ENCODE measurements at regions of chr3 and their contacts with region 1.

Region 1: GRCh38 chr3:188400494-188401243 is 246.7 kb downstream of the LPP start:
- DNase-seq: peak; percentile 82
- ATAC-seq: peak; percentile 87
- H3K4me3 ChIP-seq: no peak overlapping the region
- H3K4me3 Mint-ChIP-seq: peak overlapping the region; percentile 53
- H3K27ac ChIP-seq: peak overlapping the region; percentile 89 to 95
- H3K27ac Mint-ChIP-seq: peak overlapping the region; percentile 95
- H3K4me1 ChIP-seq: peaks cover 63 to 72% of the 10 kb centered on the region in 2 donors
- H3K4me1 Mint-ChIP-seq: peaks cover 87% of the 10 kb centered on the region
- H3K27me3 ChIP-seq: no peaks in the 10 kb centered on the region
- H3K27me3 Mint-ChIP-seq: no peaks in the 10 kb centered on the region
- CTCF ChIP-seq: no peak

Region 2: DNA sequence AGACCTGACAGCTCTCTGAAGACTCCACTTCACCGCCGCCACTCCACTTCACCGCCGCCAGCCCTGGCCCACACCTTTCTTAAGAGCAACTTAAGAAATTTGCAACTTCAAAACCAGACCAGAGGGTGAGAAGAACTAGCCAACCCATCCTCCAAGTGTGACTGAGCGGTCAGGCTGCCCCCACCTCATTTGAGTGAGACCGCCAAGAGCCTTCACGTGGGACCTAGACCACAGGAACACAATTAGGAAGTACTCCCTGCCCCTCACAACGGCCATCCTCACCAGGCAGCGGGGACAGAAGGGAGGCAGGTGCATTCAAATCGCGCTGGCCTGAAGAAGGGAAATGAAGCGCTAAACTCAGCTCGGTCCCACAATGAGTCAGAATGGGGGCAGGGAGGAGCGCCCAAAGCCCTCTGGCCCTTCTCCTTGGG is 498.6 kb before region 1 on chr3:
- CTCF ChIA-PET with region 1: no interaction called
- POLR2A ChIA-PET with region 1: no interaction called
- intact Hi-C with region 1: no loop called
- DNase-seq: peak; percentile 34
- ATAC-seq: peak; percentile 60
- H3K4me3 ChIP-seq: no peak overlapping the region
- H3K4me3 Mint-ChIP-seq: peak overlapping the region; percentile 52
- H3K27ac ChIP-seq: no peak overlapping the region
- H3K27ac Mint-ChIP-seq: no peak overlapping the region
- H3K4me1 ChIP-seq: peaks cover 0 to 18% of the 10 kb centered on the region in 2 donors
- H3K4me1 Mint-ChIP-seq: peaks cover 15% of the 10 kb centered on the region
- H3K27me3 ChIP-seq: peaks cover 0 to 20% (median 6%) of the 10 kb centered on the region in 4 experiments
- H3K27me3 Mint-ChIP-seq: peaks cover 27% of the 10 kb centered on the region
- CTCF ChIP-seq: no peak

Region 3: DNA sequence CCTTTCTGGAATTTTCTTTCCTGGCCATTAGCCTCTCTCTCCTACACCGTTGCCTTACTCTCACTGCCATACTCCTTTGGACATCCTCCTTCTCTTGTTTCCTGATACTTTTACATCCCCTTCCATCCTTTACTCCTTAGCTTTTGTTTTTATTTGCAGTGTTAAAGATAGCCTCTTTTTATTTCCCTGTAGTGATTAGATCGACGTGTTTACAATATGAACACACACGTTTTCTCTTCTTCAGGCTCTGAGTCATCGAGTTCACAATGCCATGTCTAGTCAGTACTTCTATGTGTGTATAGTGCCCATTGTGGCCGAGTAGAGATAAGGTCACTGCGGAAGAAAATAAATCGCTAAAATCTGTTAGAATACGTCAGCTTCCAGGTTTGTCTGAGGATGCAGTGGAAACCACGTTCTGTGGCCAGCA is 38.3 kb before region 1 on chr3:
- CTCF ChIA-PET with region 1: interaction called, 4 read pairs
- POLR2A ChIA-PET with region 1: no interaction called
- intact Hi-C with region 1: loop called (anchors 2 kb)
- DNase-seq: no peak
- ATAC-seq: peak; percentile 44
- H3K4me3 ChIP-seq: no peak overlapping the region
- H3K4me3 Mint-ChIP-seq: peak overlapping the region; percentile 55
- H3K27ac ChIP-seq: no peak overlapping the region
- H3K27ac Mint-ChIP-seq: peak overlapping the region; percentile 77
- H3K4me1 ChIP-seq: peaks cover 43 to 63% of the 10 kb centered on the region in 2 donors
- H3K4me1 Mint-ChIP-seq: peaks cover 78% of the 10 kb centered on the region
- H3K27me3 ChIP-seq: no peaks in the 10 kb centered on the region
- H3K27me3 Mint-ChIP-seq: no peaks in the 10 kb centered on the region
- CTCF ChIP-seq: no peak

Region 4: GRCh38 chr3:188421836-188422540 is 21.3 kb after region 1 on chr3:
- CTCF ChIA-PET with region 1: interaction called, 20 read pairs
- POLR2A ChIA-PET with region 1: interaction called, 9 read pairs
- intact Hi-C with region 1: loop called (anchors 1 kb)
- DNase-seq: peak; percentile 89
- ATAC-seq: peak; percentile 95
- H3K4me3 ChIP-seq: peak overlapping the region in 1 of 5 experiments; percentile 47
- H3K4me3 Mint-ChIP-seq: peak overlapping the region; percentile 74
- H3K27ac ChIP-seq: peak overlapping the region; percentile 89 to 94
- H3K27ac Mint-ChIP-seq: peak overlapping the region; percentile 98
- H3K4me1 ChIP-seq: peaks cover 59 to 72% of the 10 kb centered on the region in 2 donors
- H3K4me1 Mint-ChIP-seq: peaks cover 90% of the 10 kb centered on the region
- H3K27me3 ChIP-seq: no peaks in the 10 kb centered on the region
- H3K27me3 Mint-ChIP-seq: no peaks in the 10 kb centered on the region
- CTCF ChIP-seq: no peak

Region 5: GRCh38 chr3:188468662-188469061 is 68.0 kb after region 1 on chr3:
- CTCF ChIA-PET with region 1: no interaction called
- POLR2A ChIA-PET with region 1: interaction called, 11 read pairs
- intact Hi-C with region 1: no loop called
- DNase-seq: no peak
- ATAC-seq: no peak
- H3K4me3 ChIP-seq: no peak overlapping the region
- H3K4me3 Mint-ChIP-seq: no peak overlapping the region
- H3K27ac ChIP-seq: no peak overlapping the region
- H3K27ac Mint-ChIP-seq: no peak overlapping the region
- H3K4me1 ChIP-seq: peaks cover 0 to 12% of the 10 kb centered on the region in 2 donors
- H3K4me1 Mint-ChIP-seq: peaks cover 32% of the 10 kb centered on the region
- H3K27me3 ChIP-seq: no peaks in the 10 kb centered on the region
- H3K27me3 Mint-ChIP-seq: no peaks in the 10 kb centered on the region
- CTCF ChIP-seq: no peak

Region 6: GRCh38 chr3:188573291-188573940 is 172.7 kb after region 1 on chr3:
- CTCF ChIA-PET with region 1: interaction called, 10 read pairs
- POLR2A ChIA-PET with region 1: no interaction called
- intact Hi-C with region 1: no loop called
- DNase-seq: peak; percentile 59
- ATAC-seq: peak; percentile 62
- H3K4me3 ChIP-seq: no peak overlapping the region
- H3K4me3 Mint-ChIP-seq: peak overlapping the region; percentile 52
- H3K27ac ChIP-seq: no peak overlapping the region
- H3K27ac Mint-ChIP-seq: peak overlapping the region; percentile 57
- H3K4me1 ChIP-seq: peaks cover 11 to 20% of the 10 kb centered on the region in 2 donors
- H3K4me1 Mint-ChIP-seq: peaks cover 26% of the 10 kb centered on the region
- H3K27me3 ChIP-seq: no peaks in the 10 kb centered on the region
- H3K27me3 Mint-ChIP-seq: no peaks in the 10 kb centered on the region
- CTCF ChIP-seq: peak; percentile 22

Measured in B cell (primary cell).